Right ventricle myocardium superior (tissue), 1 donor: ENCODE measurements at regions of chr3 and their contacts with region 1.

Region 1: DNA sequence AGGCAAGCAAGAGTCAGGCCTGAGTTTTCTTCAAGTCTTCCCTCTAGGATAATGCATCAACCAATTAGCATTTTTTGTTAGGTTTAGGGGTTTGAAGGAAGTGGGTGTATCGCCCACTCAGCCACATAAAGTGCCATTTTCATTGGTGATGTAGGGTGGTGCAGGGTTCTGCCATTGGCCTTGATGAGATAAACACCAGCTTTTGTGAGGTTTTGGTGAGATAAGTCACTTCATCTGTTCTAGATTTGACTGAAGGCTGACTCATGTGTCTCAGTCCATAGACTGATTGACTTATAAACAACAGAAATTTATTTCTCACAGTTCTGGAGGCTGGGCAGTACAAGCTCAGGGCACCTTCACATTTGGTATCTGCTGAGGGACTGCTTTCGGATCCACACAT is 84.5 kb upstream of the C3orf80 start:
- DNase-seq: no peak
- ATAC-seq: no peak

Region 2: DNA sequence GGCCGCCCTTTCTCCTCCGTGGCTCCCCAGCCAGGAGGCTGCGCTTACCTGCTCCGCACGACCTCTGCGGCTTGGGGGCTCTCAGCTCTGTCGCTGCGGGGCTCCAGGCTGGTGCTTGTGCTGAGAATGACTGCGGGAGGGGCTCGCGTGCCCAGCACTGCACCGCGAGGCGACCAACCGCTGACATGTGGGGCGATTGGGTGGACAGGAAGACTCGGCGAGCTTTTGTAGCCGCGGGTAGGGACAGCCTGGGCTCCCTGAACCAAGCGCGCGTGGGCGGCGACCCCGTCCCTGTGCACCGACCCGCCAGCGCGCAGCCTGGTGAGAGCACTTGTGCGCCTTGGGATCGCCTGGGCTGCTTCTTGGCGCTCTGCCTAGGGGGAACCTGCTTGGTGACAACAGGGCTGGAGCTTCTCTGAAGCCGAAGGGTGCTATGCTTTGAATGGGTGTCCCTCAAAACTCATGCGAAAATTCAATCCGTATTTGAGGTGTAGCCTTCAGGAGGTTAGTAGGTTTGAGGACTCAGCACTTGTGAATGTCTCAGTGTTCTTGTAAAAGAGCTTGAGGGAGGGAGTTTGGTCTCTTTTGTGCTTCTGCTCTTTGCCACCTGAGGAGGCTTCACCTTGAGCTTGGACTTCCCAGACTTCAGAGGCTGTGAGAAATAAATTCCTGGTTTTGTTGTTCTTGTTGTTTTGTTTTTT is 101.7 kb before region 1 on chr3:
- intact Hi-C with region 1: loop called (anchors 10 kb)
- DNase-seq: no peak
- ATAC-seq: peak; percentile 36